ENCODE measurements at regions of chr3 and their contacts with region 1.

Region 1: GRCh38 chr3:52014613-52015012 is 18.9 kb upstream of the RPL29 start:
- DNase-seq: no peak
- H3K4me3 ChIP-seq: no peak overlapping the region
- H3K27ac ChIP-seq: no peak overlapping the region
- H3K27me3 ChIP-seq: peaks cover 3% of the 10 kb centered on the region
- CTCF ChIP-seq: peak; percentile 39

Region 2: GRCh38 chr3:50337191-50337841 is 1677.3 kb before region 1 on chr3:
- CTCF ChIA-PET with region 1: no interaction called
- POLR2A ChIA-PET with region 1: interaction called, 12 read pairs
- DNase-seq: peak; percentile 99
- H3K4me3 ChIP-seq: peak overlapping the region; percentile 98
- H3K27ac ChIP-seq: peak overlapping the region; percentile 96
- H3K27me3 ChIP-seq: no peaks in the 10 kb centered on the region
- CTCF ChIP-seq: no peak

Region 3: GRCh38 chr3:52026041-52026440 is 11.4 kb after region 1 on chr3:
- CTCF ChIA-PET with region 1: no interaction called
- POLR2A ChIA-PET with region 1: no interaction called
- DNase-seq: no peak
- H3K4me3 ChIP-seq: no peak overlapping the region
- H3K27ac ChIP-seq: no peak overlapping the region
- H3K27me3 ChIP-seq: no peaks in the 10 kb centered on the region
- CTCF ChIP-seq: no peak

Region 4: GRCh38 chr3:52154117-52155094 is 139.8 kb after region 1 on chr3 and contains the start of gene POC1A:
- CTCF ChIA-PET with region 1: no interaction called
- POLR2A ChIA-PET with region 1: interaction called, 10 read pairs
- DNase-seq: peak; percentile 95
- H3K4me3 ChIP-seq: peak within 1 kb of the TSS; percentile 76
- H3K27ac ChIP-seq: peak within 1 kb of the TSS; percentile 69
- H3K27me3 ChIP-seq: no peaks in the 10 kb centered on the region
- CTCF ChIP-seq: no peak
- polyA plus RNA-seq, gene POC1A: 4.1 and 4.5 TPM in 2 replicates

Measured in AG04450 (cell line).